PC-9 (cell line): ENCODE measurements at regions of chr3 and their contacts with region 1.

Region 1: GRCh38 chr3:194003125-194004057 is 132.6 kb upstream of the HES1 start:
- DNase-seq: peak; percentile 98
- H3K4me3 ChIP-seq: peak overlapping the region; percentile 35; the same call in 1 of the 2 replicates
- H3K27ac ChIP-seq: peak overlapping the region; percentile 88
- H3K4me1 ChIP-seq: peaks cover 40% of the 10 kb centered on the region
- H3K27me3 ChIP-seq: no peaks in the 10 kb centered on the region
- CTCF ChIP-seq: no peak

Region 2: GRCh38 chr3:192417012-192417411 is 1586.4 kb before region 1 on chr3:
- CTCF ChIA-PET with region 1: no interaction called
- POLR2A ChIA-PET with region 1: no interaction called
- intact Hi-C with region 1: no loop called
- DNase-seq: no peak
- H3K4me3 ChIP-seq: no peak overlapping the region
- H3K27ac ChIP-seq: no peak overlapping the region
- H3K4me1 ChIP-seq: no peaks in the 10 kb centered on the region
- H3K27me3 ChIP-seq: no peaks in the 10 kb centered on the region
- CTCF ChIP-seq: no peak

Region 3: GRCh38 chr3:193680220-193680619 is 323.2 kb before region 1 on chr3:
- CTCF ChIA-PET with region 1: no interaction called
- POLR2A ChIA-PET with region 1: no interaction called
- intact Hi-C with region 1: no loop called
- DNase-seq: no peak
- H3K4me3 ChIP-seq: no peak overlapping the region
- H3K27ac ChIP-seq: no peak overlapping the region
- H3K4me1 ChIP-seq: no peaks in the 10 kb centered on the region
- H3K27me3 ChIP-seq: no peaks in the 10 kb centered on the region
- CTCF ChIP-seq: no peak

Region 4: GRCh38 chr3:193872265-193872753 is 131.1 kb before region 1 on chr3:
- CTCF ChIA-PET with region 1: interaction called, 3 read pairs
- POLR2A ChIA-PET with region 1: interaction called, 4 read pairs
- intact Hi-C with region 1: loop called (anchors 1 kb)
- DNase-seq: peak; percentile 94 to 100
- H3K4me3 ChIP-seq: no peak overlapping the region; the same call in 1 of the 2 replicates
- H3K27ac ChIP-seq: peak overlapping the region; percentile 94
- H3K4me1 ChIP-seq: peaks cover 83% of the 10 kb centered on the region
- H3K27me3 ChIP-seq: no peaks in the 10 kb centered on the region
- CTCF ChIP-seq: no peak

Region 5: DNA sequence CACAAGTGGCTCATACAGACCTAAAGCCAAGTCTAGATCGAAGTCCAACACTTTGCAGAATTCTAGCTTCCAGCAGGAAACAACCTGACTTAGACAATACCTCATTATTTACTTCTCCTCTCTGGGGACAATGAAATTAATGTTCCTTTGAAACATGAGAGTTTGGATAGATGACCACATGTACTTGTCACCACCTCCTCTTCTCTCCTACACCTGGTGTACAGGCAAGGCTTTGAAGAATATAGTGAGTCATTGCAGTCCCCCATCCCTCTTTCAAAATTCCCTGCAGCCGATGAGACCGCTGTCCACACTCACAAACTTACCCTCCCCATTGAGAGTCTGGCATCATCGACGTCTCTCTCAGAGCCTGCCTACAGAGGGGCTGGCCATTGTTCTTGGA is 56.4 kb before region 1 on chr3:
- CTCF ChIA-PET with region 1: no interaction called
- POLR2A ChIA-PET with region 1: no interaction called
- intact Hi-C with region 1: loop called (anchors 1 kb)
- DNase-seq: peak; percentile 83 to 87
- H3K4me3 ChIP-seq: no peak overlapping the region
- H3K27ac ChIP-seq: no peak overlapping the region
- H3K4me1 ChIP-seq: peaks cover 16% of the 10 kb centered on the region
- H3K27me3 ChIP-seq: no peaks in the 10 kb centered on the region
- CTCF ChIP-seq: no peak

Region 6: GRCh38 chr3:194023501-194024280 is 20.3 kb after region 1 on chr3:
- CTCF ChIA-PET with region 1: interaction called, 4 read pairs
- POLR2A ChIA-PET with region 1: no interaction called
- intact Hi-C with region 1: loop called (anchors 2 kb)
- DNase-seq: peak in 1 of 2 experiments; percentile 31
- H3K4me3 ChIP-seq: no peak overlapping the region
- H3K27ac ChIP-seq: no peak overlapping the region
- H3K4me1 ChIP-seq: peaks cover 18% of the 10 kb centered on the region
- H3K27me3 ChIP-seq: no peaks in the 10 kb centered on the region
- CTCF ChIP-seq: no peak

Region 7: DNA sequence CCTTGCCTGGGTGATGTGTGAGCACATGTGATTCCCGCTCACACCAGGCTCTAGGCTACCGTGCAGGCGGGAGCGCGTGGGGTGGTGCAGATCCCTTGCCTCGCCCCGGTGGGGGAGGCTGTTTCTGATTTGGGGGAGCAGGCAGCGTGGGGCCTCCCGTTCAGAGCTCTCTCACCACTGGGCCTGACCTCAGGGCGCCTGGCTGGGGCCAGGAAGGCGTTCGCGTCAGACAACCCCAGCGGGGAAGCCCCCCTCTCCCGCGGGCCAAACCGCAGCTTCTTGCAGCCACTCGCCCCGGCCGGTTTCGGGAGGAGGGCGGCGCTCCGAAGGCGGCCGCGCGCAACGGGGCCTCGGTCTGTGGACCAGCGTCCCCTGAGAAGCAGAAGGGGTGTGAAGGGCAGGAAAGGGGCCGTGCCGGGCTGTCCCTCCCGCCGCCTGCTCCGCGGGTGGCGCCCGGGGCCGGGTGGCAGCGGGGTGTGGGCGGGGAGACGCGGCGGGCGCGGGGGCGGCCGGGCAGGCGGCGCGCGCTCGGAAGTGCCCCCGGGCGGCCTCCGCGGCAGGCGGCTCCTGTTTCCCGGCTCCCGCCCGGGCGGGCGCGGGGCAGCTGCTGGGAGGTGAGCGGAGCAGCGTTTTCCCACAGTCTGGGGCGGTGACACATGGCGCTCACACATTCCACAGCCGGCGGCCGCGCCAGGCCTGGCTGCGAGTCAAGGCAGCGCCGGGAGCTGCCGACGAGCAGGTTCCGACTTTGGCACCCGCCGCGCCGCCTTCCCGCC is 67.4 kb after region 1 on chr3:
- CTCF ChIA-PET with region 1: interaction called, 7 read pairs
- POLR2A ChIA-PET with region 1: interaction called, 10 read pairs
- intact Hi-C with region 1: loop called (anchors 1 kb)
- DNase-seq: peak; percentile 92 to 97
- H3K4me3 ChIP-seq: peak overlapping the region; percentile 59; the same call in 1 of the 2 replicates
- H3K27ac ChIP-seq: peak overlapping the region; percentile 74
- H3K4me1 ChIP-seq: peaks cover 47% of the 10 kb centered on the region
- H3K27me3 ChIP-seq: no peaks in the 10 kb centered on the region
- CTCF ChIP-seq: no peak

Region 8: GRCh38 chr3:194269610-194270145 is 266.3 kb after region 1 on chr3:
- CTCF ChIA-PET with region 1: no interaction called
- POLR2A ChIA-PET with region 1: no interaction called
- intact Hi-C with region 1: loop called (anchors 1 kb)
- DNase-seq: peak; percentile 82 to 88
- H3K4me3 ChIP-seq: peak overlapping the region; percentile 38; the same call in 1 of the 2 replicates
- H3K27ac ChIP-seq: peak overlapping the region; percentile 91
- H3K4me1 ChIP-seq: peaks cover 72% of the 10 kb centered on the region
- H3K27me3 ChIP-seq: no peaks in the 10 kb centered on the region
- CTCF ChIP-seq: peak; percentile 76